ENCODE measurements at regions of chr1 and their contacts with region 1.

Region 1: GRCh38 chr1:167687919-167688519 is 33.8 kb upstream of the MPZL1 start:
- DNase-seq: peak; percentile 82

Region 2: GRCh38 chr1:167599957-167600581 is 88.0 kb before region 1 on chr1:
- CTCF ChIA-PET with region 1: interaction called, 21 read pairs
- POLR2A ChIA-PET with region 1: no interaction called
- DNase-seq: no peak

Region 3: GRCh38 chr1:167737169-167737568 is 49.1 kb after region 1 on chr1:
- CTCF ChIA-PET with region 1: no interaction called
- POLR2A ChIA-PET with region 1: no interaction called
- DNase-seq: no peak